ENCODE measurements at regions of chr12 and their contacts with region 1.

Region 1: GRCh38 chr12:6965026-6965661 is 5.3 kb downstream of the PHB2 start:
- DNase-seq: peak; percentile 79 to 90 (median 84)
- H3K4me3 ChIP-seq: no peak overlapping the region
- H3K4me3 Mint-ChIP-seq: peak overlapping the region in 2 of 7 donors; percentile 38 to 84
- H3K27ac ChIP-seq: no peak overlapping the region
- H3K27ac Mint-ChIP-seq: peak overlapping the region; percentile 85 to 98 (median 90)
- H3K4me1 ChIP-seq: peaks cover 59% of the 10 kb centered on the region
- H3K4me1 Mint-ChIP-seq: peaks cover 43 to 60% (median 59%) of the 10 kb centered on the region in 3 donors
- H3K27me3 ChIP-seq: no peaks in the 10 kb centered on the region
- H3K27me3 Mint-ChIP-seq: no peaks in the 10 kb centered on the region

Region 2: GRCh38 chr12:6672143-6672542 is 293.0 kb before region 1 on chr12:
- CTCF ChIA-PET with region 1: no interaction called
- POLR2A ChIA-PET with region 1: no interaction called
- DNase-seq: no peak
- H3K4me3 ChIP-seq: no peak overlapping the region
- H3K4me3 Mint-ChIP-seq: no peak overlapping the region
- H3K27ac ChIP-seq: no peak overlapping the region
- H3K27ac Mint-ChIP-seq: no peak overlapping the region
- H3K4me1 ChIP-seq: no peaks in the 10 kb centered on the region
- H3K4me1 Mint-ChIP-seq: peaks cover 0 to 4% (median 0%) of the 10 kb centered on the region in 3 donors
- H3K27me3 ChIP-seq: no peaks in the 10 kb centered on the region
- H3K27me3 Mint-ChIP-seq: no peaks in the 10 kb centered on the region

Region 3: DNA sequence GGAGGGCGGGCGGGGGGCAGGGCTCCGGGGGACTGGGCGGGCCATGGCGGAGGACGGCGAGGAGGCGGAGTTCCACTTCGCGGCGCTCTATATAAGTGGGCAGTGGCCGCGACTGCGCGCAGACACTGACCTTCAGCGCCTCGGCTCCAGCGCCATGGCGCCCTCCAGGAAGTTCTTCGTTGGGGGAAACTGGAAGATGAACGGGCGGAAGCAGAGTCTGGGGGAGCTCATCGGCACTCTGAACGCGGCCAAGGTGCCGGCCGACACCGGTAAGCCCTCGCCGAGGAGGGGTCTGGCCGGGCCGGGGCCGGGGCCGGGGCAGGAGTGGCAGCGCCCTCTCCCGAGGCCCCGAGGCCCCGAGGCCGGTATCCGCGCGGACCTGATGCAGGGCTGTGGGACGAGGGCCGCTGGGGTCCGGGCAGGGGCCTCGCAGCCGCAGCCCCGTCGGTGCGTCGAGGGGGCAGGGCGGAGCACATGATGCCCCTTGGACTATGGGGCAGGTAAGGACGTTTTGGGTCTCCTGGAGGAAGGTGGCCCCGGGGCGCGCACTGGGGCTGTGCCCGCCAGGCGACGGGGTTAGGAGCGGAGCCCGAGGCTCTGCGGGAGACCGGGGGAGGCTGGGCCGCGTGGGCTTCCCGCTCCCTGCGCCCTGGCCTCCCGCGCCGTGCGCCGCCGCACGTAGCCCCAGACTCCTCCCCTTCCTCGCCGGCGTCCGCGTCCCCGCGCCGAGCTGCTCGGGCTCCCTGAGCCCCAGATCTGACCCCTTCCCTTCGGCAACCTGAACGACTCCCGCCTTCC is 97.5 kb before region 1 on chr12 and contains the start of gene TPI1:
- CTCF ChIA-PET with region 1: interaction called, 36 read pairs
- POLR2A ChIA-PET with region 1: interaction called, 10 read pairs
- DNase-seq: peak; percentile 62 to 85 (median 73)
- H3K4me3 ChIP-seq: peak within 1 kb of the TSS; percentile 58
- H3K4me3 Mint-ChIP-seq: peak within 1 kb of the TSS; percentile 87 to 98 (median 92)
- H3K27ac ChIP-seq: peak within 1 kb of the TSS; percentile 76
- H3K27ac Mint-ChIP-seq: peak within 1 kb of the TSS; percentile 85 to 96 (median 92)
- H3K4me1 ChIP-seq: peaks cover 38% of the 10 kb centered on the region
- H3K4me1 Mint-ChIP-seq: peaks cover 43 to 55% (median 47%) of the 10 kb centered on the region in 3 donors
- H3K27me3 ChIP-seq: no peaks in the 10 kb centered on the region
- H3K27me3 Mint-ChIP-seq: no peaks in the 10 kb centered on the region
- total RNA-seq, gene TPI1: 1,331 to 1,374 TPM

Region 4: GRCh38 chr12:6953442-6954315 is 11.5 kb before region 1 on chr12:
- CTCF ChIA-PET with region 1: interaction called, 815 read pairs
- POLR2A ChIA-PET with region 1: interaction called, 481 read pairs
- DNase-seq: peak; percentile 79 to 92 (median 80)
- H3K4me3 ChIP-seq: peak overlapping the region; percentile 88
- H3K4me3 Mint-ChIP-seq: peak overlapping the region; percentile 95 to 99 (median 99)
- H3K27ac ChIP-seq: peak overlapping the region; percentile 68
- H3K27ac Mint-ChIP-seq: peak overlapping the region; percentile 94 to 99 (median 97)
- H3K4me1 ChIP-seq: peaks cover 76% of the 10 kb centered on the region
- H3K4me1 Mint-ChIP-seq: peaks cover 79 to 89% (median 81%) of the 10 kb centered on the region in 3 donors
- H3K27me3 ChIP-seq: no peaks in the 10 kb centered on the region
- H3K27me3 Mint-ChIP-seq: no peaks in the 10 kb centered on the region